Endothelial cell of umbilical vein (primary cell): ENCODE measurements at regions of chr9 and their contacts with region 1.

Region 1: DNA sequence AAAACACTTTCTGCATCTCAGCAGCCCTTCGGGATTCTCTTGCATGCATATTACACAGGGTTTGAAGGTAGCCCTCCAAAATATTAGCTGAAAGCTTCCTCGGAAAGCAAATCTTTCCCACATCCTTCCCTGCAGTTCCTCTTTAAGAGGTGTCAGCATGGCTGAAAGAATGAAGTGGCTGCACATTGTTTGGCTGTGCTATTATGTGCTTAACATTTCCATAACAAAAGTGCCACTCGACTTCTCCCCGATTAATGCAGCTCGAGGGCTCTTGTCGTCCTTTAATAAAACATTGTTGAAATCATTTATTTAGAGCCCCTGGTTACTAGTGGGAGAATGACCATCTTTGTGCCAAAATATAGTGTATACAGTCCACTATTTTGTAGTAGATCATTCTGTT is 6.5 kb downstream of the GAS1 start:
- DNase-seq: no peak
- H3K4me3 ChIP-seq: no peak overlapping the region
- H3K27ac ChIP-seq: no peak overlapping the region
- H3K4me1 ChIP-seq: no peaks in the 10 kb centered on the region
- H3K27me3 ChIP-seq: peaks cover 15 to 27% of the 10 kb centered on the region in 2 experiments
- CTCF ChIP-seq: no peak
- POLR2A ChIP-seq: no peak

Region 2: GRCh38 chr9:86955561-86955960 is 14.8 kb after region 1 on chr9:
- CTCF ChIA-PET with region 1: interaction called, 4 read pairs
- POLR2A ChIA-PET with region 1: interaction called, 10 read pairs
- dilution Hi-C with region 1: no loop called
- intact Hi-C with region 1: no loop called
- DNase-seq: no peak
- H3K4me3 ChIP-seq: no peak overlapping the region
- H3K27ac ChIP-seq: no peak overlapping the region
- H3K4me1 ChIP-seq: no peaks in the 10 kb centered on the region
- H3K27me3 ChIP-seq: no peaks in the 10 kb centered on the region
- CTCF ChIP-seq: no peak
- POLR2A ChIP-seq: no peak

Region 3: GRCh38 chr9:87223392-87224246 is 282.8 kb after region 1 on chr9:
- CTCF ChIA-PET with region 1: no interaction called
- POLR2A ChIA-PET with region 1: no interaction called
- dilution Hi-C with region 1: no loop called
- intact Hi-C with region 1: no loop called
- DNase-seq: no peak
- H3K4me3 ChIP-seq: no peak overlapping the region
- H3K27ac ChIP-seq: no peak overlapping the region
- H3K4me1 ChIP-seq: no peaks in the 10 kb centered on the region
- H3K27me3 ChIP-seq: no peaks in the 10 kb centered on the region
- CTCF ChIP-seq: no peak
- POLR2A ChIP-seq: no peak